ENCODE measurements at regions of chr7 and their contacts with region 1.

Region 1: GRCh38 chr7:137898839-137899721 is 52.3 kb upstream of the DGKI start:
- DNase-seq: peak; percentile 62 to 84 (median 81)
- H3K4me3 ChIP-seq: no peak overlapping the region
- H3K27ac ChIP-seq: no peak overlapping the region
- H3K4me1 ChIP-seq: no peaks in the 10 kb centered on the region
- H3K27me3 ChIP-seq: no peaks in the 10 kb centered on the region
- CTCF ChIP-seq: peak; percentile 74 to 77 (median 77)
- EP300 ChIP-seq: no peak
- POLR2A ChIP-seq: no peak

Region 2: DNA sequence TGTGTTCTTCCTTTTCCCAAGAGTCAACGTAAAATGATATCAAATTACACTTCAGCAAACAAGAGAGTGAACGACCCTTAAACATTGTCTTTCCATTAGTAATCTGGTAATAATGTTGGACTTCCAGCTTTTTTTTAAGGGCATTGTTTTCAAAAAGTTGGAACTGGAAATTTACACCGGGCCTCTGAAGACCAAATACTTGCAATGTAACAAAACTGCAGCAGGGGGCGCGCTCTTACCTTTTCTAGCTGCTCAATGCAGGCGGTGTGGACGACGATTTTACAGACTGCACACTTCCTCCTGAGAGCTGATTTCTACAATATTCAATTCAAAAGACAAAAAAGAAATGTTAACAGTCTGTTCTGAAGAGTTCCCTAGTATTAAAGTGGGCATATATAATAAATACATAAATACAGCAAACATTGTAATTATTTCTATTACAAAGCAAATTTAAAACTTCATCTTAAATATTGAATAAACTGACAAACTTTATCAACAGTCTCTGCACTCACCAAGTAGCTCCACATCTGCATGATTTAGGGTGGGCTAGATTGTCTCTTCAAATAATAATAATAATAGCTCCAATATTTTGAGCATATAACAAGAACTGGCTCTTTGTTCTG is 242.7 kb before region 1 on chr7:
- intact Hi-C with region 1: loop called (anchors 5 to 10 kb)
- DNase-seq: peak; percentile 32 to 76 (median 71)
- H3K4me3 ChIP-seq: no peak overlapping the region
- H3K27ac ChIP-seq: no peak overlapping the region
- H3K4me1 ChIP-seq: no peaks in the 10 kb centered on the region
- H3K27me3 ChIP-seq: no peaks in the 10 kb centered on the region
- CTCF ChIP-seq: peak; percentile 36 to 53 (median 48)
- EP300 ChIP-seq: no peak
- POLR2A ChIP-seq: no peak

Region 3: DNA sequence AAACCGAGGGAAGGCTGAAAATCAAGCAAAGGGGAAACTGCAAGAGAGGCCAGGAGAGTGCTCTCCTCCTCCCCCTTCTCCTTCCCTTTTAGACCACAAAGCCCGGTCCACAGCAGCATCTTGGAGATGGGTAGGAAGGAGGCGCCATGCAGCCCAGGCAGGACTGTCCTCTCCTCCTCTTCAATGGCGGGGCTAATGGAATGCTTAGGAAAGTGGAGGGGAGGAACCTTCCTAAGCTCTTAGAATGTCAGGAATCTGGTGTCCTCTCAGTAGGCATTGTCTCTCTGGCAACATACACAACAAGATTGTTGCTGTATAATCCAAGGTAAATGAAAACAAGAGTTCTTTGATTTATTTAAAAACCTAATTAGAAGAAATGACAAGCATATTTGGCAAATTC is 237.4 kb before region 1 on chr7:
- intact Hi-C with region 1: loop called (anchors 5 to 10 kb)
- DNase-seq: no peak
- H3K4me3 ChIP-seq: no peak overlapping the region
- H3K27ac ChIP-seq: no peak overlapping the region
- H3K4me1 ChIP-seq: no peaks in the 10 kb centered on the region
- H3K27me3 ChIP-seq: no peaks in the 10 kb centered on the region
- CTCF ChIP-seq: no peak
- EP300 ChIP-seq: no peak
- POLR2A ChIP-seq: no peak

Region 4: DNA sequence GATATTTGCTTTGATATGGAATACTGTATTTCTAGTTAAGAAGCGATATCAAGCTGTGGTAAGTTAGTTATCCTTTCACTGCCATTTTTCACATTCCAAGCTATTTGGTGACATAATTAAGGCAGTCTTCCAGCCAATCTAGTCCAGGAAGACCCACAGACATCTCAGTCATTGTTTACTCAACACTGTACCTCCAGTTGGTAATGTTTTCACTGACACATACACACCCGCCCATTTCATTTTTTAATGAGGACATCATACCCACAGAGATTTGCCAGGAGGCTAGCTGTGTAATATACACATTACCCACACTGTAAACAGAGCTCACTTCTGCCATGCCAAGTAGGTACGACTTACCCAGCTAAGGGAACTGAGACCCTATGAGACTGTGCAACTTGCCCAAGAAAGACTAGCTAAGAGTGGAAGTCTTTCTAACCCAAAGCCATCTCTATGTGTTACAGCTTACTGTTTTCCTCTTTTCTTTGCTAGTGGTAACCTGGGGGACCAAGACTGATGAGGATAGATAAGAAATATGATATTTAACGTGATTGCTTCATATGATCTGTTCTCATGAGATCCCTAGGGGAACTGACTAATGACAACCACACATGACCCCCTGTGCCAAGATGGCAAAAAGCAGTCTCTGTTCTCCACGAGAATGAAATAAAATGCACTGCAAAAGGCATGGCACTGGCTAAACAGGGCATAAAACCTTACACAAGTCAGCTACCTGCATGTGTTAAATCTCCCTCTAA is 231.3 kb before region 1 on chr7:
- intact Hi-C with region 1: loop called in 2 of 4 experiments (anchors 5 to 10 kb)
- DNase-seq: no peak
- H3K4me3 ChIP-seq: no peak overlapping the region
- H3K27ac ChIP-seq: no peak overlapping the region
- H3K4me1 ChIP-seq: no peaks in the 10 kb centered on the region
- H3K27me3 ChIP-seq: no peaks in the 10 kb centered on the region
- CTCF ChIP-seq: no peak
- EP300 ChIP-seq: no peak
- POLR2A ChIP-seq: no peak

Region 5: GRCh38 chr7:138008547-138009349 is 109.7 kb after region 1 on chr7:
- intact Hi-C with region 1: loop called in 3 of 4 experiments (anchors 2 kb)
- DNase-seq: peak in 1 of 5 donors; percentile 56
- H3K4me3 ChIP-seq: no peak overlapping the region
- H3K27ac ChIP-seq: no peak overlapping the region
- H3K4me1 ChIP-seq: no peaks in the 10 kb centered on the region
- H3K27me3 ChIP-seq: no peaks in the 10 kb centered on the region
- CTCF ChIP-seq: peak; percentile 68 to 87 (median 85)
- EP300 ChIP-seq: no peak
- POLR2A ChIP-seq: no peak

Region 6: DNA sequence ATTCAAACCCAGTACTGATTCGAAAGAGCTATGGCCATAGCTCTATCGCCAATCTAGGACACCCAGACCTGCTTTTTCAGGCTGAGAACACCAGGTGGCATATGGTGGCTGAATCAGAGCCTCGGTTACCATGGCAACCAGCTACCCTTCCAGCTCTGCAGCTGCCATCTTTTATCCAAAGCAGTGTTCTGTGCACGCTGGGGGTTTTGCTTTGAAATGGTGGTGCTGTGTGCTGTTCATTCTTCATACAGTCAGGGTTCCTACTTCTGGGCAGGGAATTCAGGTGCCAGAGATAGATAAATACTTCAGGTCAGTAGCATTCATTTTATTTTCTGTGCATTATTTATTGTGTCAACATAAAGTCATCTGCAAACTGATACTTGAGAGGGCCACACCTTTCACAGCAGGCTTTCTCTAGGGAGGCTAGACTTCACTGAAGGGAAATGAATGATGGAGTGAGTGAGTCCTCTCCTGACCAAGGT is 262.6 kb after region 1 on chr7:
- intact Hi-C with region 1: no loop called
- DNase-seq: peak; percentile 56 to 80 (median 68)
- H3K4me3 ChIP-seq: no peak overlapping the region
- H3K27ac ChIP-seq: no peak overlapping the region
- H3K4me1 ChIP-seq: no peaks in the 10 kb centered on the region
- H3K27me3 ChIP-seq: no peaks in the 10 kb centered on the region
- CTCF ChIP-seq: peak in 2 of 3 donors; percentile 44 to 54
- EP300 ChIP-seq: no peak
- POLR2A ChIP-seq: no peak

Region 7: DNA sequence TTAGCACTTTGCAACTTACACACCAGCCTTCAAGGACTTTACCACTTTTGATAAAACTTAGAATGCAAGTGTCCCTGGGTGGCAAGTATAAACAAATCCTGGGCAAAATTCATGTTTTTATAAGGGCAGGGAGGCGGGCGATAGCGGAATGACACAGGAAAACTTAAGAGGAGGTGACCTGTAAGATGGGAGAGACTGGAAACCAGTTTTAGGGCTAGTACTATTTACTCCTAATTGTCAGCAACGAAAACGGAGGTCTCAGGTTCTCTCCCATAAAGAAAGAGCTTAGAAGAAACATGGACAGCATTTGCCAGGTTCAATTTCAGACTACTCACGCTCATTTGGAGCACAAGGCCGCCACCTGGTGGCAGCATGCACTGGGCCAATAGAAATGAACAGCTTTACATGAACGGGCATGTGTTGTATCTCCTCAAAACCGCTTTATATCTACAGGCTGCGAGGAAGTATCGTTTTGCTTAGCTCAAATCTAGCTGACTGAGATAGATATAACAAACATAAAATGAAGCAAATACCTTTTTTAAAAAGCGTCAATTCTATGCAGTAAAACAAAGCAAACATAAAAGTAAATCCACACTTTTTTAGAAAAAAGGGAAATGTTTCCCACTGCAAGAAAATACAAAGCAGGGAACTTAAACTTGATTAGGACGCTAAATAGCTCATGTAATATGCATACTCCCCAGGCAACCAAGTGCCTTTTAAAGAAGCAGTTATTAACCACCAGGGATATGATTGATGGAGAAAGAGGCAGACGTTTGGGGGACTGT is 839.7 kb after region 1 on chr7:
- intact Hi-C with region 1: loop called in 1 of 4 experiments (anchors 5 kb)
- DNase-seq: peak; percentile 82 to 93 (median 88)
- H3K4me3 ChIP-seq: no peak overlapping the region
- H3K27ac ChIP-seq: peak overlapping the region in 1 of 2 donors; percentile 43
- H3K4me1 ChIP-seq: no peaks in the 10 kb centered on the region
- H3K27me3 ChIP-seq: no peaks in the 10 kb centered on the region
- CTCF ChIP-seq: peak; percentile 66 to 82 (median 75)
- EP300 ChIP-seq: no peak
- POLR2A ChIP-seq: no peak